CD4-positive, alpha-beta T cell (primary cell): ENCODE measurements at regions of chr21 and their contacts with region 1.

Region 1: GRCh38 chr21:15005391-15005790 is 59.4 kb downstream of the NRIP1 start:
- DNase-seq: peak in 7 of 14 experiments; percentile 2 to 36 (median 20)
- ATAC-seq: peak; percentile 84
- H3K4me3 ChIP-seq: peak overlapping the region; percentile 37
- H3K4me3 Mint-ChIP-seq: peak overlapping the region; percentile 57
- H3K27ac ChIP-seq: peak overlapping the region in 1 of 2 donors; percentile 14
- H3K27ac Mint-ChIP-seq: peak overlapping the region; percentile 80
- H3K4me1 ChIP-seq: peaks cover 4% of the 10 kb centered on the region
- H3K4me1 Mint-ChIP-seq: peaks cover 50% of the 10 kb centered on the region
- H3K27me3 ChIP-seq: no peaks in the 10 kb centered on the region
- H3K27me3 Mint-ChIP-seq: no peaks in the 10 kb centered on the region
- CTCF ChIP-seq: no peak

Region 2: DNA sequence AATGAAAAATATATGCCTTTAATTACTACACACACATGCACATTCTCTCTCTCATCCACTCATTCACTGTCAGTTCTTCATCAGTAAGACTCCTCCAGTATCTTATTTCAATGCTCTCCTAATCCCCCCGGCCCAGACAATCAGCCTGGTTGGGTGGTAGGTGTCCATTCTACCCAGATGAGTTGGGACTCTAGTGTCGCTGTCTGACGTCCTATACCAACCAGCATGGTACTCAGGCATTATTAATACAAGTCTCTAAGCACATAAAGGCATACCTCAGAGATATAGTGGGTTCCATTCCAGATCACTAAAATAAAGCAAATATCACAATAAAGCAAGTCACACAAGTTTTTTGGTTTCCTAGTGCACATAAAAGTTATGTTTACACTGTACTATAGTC is 39.6 kb after region 1 on chr21:
- CTCF ChIA-PET with region 1: no interaction called
- POLR2A ChIA-PET with region 1: interaction called, 4 read pairs
- intact Hi-C with region 1: loop called in 1 of 2 experiments (anchors 5 kb)
- DNase-seq: no peak
- ATAC-seq: no peak
- H3K4me3 ChIP-seq: no peak overlapping the region
- H3K4me3 Mint-ChIP-seq: no peak overlapping the region
- H3K27ac ChIP-seq: no peak overlapping the region
- H3K27ac Mint-ChIP-seq: no peak overlapping the region
- H3K4me1 ChIP-seq: no peaks in the 10 kb centered on the region
- H3K4me1 Mint-ChIP-seq: peaks cover 61% of the 10 kb centered on the region
- H3K27me3 ChIP-seq: no peaks in the 10 kb centered on the region
- H3K27me3 Mint-ChIP-seq: no peaks in the 10 kb centered on the region
- CTCF ChIP-seq: no peak